CD4-positive, alpha-beta T cell (primary cell): ENCODE measurements at regions of chr3 and their contacts with region 1.

Region 1: GRCh38 chr3:128725932-128726690 is at the start of gene RAB7A:
- DNase-seq: peak; percentile 94 to 99 (median 97)
- ATAC-seq: peak; percentile 98
- H3K4me3 ChIP-seq: peak within 1 kb of the TSS; percentile 77
- H3K4me3 Mint-ChIP-seq: peak within 1 kb of the TSS; percentile 100
- H3K27ac ChIP-seq: peak within 1 kb of the TSS; percentile 64 to 78
- H3K27ac Mint-ChIP-seq: peak within 1 kb of the TSS; percentile 97
- H3K4me1 ChIP-seq: peaks cover 47% of the 10 kb centered on the region
- H3K4me1 Mint-ChIP-seq: peaks cover 57% of the 10 kb centered on the region
- H3K27me3 ChIP-seq: no peaks in the 10 kb centered on the region
- H3K27me3 Mint-ChIP-seq: no peaks in the 10 kb centered on the region
- CTCF ChIP-seq: no peak
- total RNA-seq, gene RAB7A: 113 to 121 TPM

Region 2: DNA sequence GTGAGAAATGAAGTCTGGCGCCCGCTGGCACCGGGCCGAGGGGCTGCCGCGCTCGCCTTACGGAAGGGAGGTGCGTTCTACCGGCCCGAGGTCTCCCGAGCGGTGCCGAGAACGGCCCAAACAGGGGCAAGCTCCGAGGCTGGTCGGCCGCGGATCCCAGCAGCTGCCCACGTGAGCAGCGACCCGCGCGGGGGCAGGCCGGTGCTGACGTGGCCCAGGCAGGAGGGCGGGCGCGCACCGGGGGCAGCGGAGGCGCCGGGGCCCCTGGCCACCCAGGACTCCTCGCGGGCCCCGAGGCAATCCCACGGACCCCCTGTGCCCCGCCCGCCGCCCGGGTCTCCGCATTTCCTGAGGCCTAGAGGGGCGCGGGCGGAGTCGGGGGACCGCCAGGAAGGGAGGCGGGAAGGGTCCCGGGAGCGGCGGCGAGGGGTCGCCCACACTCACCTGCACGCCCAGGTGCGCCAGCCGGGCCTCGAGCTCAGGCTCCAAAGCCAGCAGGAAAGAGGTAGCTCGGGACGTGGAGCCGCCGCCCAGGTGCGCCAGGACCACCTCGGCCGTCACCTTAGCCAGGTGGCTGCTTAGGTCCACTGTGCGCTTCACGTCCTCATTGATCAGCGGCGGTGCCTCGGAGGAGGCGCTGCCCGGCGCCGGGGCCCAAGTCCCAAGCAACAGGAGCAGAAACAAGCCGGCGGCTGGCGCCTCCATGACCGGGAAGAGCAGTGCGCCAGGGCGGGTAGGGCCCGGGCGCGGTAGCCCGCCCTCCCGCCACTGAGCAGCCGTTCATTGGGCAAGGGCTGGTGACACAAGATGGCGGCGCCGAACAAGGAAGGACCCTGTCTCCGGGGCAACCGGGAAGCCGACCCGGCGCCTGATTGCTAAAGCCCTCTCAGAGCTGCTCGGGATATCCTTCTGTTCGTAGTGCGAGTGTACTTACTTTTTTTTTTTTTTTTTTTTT is 75.7 kb before region 1 on chr3 and contains the start of gene RPN1:
- CTCF ChIA-PET with region 1: no interaction called
- POLR2A ChIA-PET with region 1: interaction called, 4 read pairs
- intact Hi-C with region 1: loop called in 1 of 2 experiments (anchors 2 kb)
- DNase-seq: peak; percentile 89 to 97 (median 94)
- ATAC-seq: peak; percentile 96
- H3K4me3 ChIP-seq: peak within 1 kb of the TSS; percentile 99
- H3K4me3 Mint-ChIP-seq: peak within 1 kb of the TSS; percentile 95
- H3K27ac ChIP-seq: peak within 1 kb of the TSS; percentile 89 to 93
- H3K27ac Mint-ChIP-seq: peak within 1 kb of the TSS; percentile 90
- H3K4me1 ChIP-seq: peaks cover 29% of the 10 kb centered on the region
- H3K4me1 Mint-ChIP-seq: peaks cover 45% of the 10 kb centered on the region
- H3K27me3 ChIP-seq: no peaks in the 10 kb centered on the region
- H3K27me3 Mint-ChIP-seq: no peaks in the 10 kb centered on the region
- CTCF ChIP-seq: no peak
- total RNA-seq, gene RPN1: 67.7 to 72.6 TPM

Region 3: DNA sequence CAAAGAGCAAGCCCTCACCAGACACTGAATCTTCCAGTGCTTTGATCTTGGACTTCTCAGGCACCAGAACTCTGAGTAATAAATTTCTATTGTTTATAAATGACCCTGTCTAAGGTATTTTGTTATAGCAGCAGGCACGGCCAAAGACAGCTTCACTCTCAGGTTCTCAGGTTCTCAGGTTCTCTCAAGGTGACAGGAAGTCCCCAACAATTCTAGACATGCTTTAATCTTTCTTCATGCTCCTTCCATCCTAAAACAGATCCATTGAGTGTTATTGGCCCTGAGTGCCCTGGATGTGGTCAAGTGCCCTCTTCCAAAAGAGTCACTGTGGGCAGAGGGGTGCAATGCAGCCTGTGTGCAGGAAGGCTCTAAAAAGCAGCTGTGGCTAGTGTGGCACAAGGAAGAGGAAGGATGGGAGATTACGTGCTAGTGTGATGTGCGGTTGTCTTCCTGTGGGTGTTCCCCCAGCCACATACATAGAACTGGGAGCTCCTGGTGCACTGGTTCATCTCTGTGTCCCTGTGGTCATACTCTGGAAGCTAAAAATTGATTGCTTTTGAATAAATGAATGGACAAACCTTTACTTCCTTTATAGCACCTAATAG is 11.1 kb before region 1 on chr3:
- CTCF ChIA-PET with region 1: no interaction called
- POLR2A ChIA-PET with region 1: interaction called, 15 read pairs
- intact Hi-C with region 1: no loop called
- DNase-seq: peak in 8 of 14 experiments; percentile 4 to 76 (median 38)
- ATAC-seq: peak; percentile 88
- H3K4me3 ChIP-seq: no peak overlapping the region
- H3K4me3 Mint-ChIP-seq: no peak overlapping the region
- H3K27ac ChIP-seq: peak overlapping the region in 1 of 2 donors; percentile 20
- H3K27ac Mint-ChIP-seq: peak overlapping the region; percentile 80
- H3K4me1 ChIP-seq: peaks cover 23% of the 10 kb centered on the region
- H3K4me1 Mint-ChIP-seq: peaks cover 25% of the 10 kb centered on the region
- H3K27me3 ChIP-seq: no peaks in the 10 kb centered on the region
- H3K27me3 Mint-ChIP-seq: no peaks in the 10 kb centered on the region
- CTCF ChIP-seq: no peak

Region 4: DNA sequence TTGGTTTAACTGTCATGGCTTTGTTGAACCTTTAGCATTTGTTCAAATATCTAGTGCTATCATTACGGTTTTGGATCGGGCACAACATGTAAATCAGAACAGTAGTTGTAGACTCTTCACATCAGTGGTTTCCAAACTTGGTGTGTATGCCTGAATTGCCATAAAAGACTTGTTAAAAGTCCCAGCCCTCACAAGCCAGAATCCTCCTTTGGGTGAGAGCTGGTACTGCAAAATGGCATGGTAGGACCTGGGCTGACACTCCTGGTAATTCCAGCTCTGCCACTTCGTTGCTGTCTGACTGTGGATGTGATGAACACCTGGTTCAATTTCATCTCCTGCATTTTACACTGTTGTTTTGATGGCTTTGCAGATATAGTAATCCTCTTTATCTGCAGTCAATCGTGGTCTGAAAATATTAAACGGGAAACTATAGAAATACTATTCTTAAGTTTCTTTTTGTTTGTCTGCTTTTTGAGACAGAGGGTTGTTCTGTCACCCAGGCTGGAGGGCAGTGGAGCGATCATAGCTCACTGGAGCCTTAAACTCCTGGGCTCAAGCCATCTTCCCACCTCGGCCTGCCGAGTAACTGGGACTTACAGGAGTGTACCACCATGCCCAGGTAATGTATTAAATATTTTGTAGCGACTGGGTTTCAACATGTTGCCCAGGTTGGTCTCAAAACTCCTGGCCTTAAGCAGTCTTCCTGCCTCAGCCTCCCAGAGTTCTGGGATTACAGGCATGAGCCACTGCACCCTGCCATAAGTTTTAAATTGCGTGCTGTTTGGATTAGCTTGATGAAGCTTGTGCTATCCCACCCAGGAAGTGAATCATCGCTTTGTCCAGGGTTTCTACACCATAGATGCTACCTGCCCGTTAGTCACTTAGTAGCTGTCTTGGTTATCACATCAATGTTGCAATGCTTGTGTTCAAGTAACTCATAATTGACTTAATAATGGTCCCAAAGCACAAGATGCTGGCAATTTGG is 61.4 kb after region 1 on chr3:
- CTCF ChIA-PET with region 1: no interaction called
- POLR2A ChIA-PET with region 1: interaction called, 6 read pairs
- intact Hi-C with region 1: loop called (anchors 2 to 5 kb)
- DNase-seq: peak in 8 of 14 experiments; percentile 8 to 79 (median 40)
- ATAC-seq: peak; percentile 54
- H3K4me3 ChIP-seq: no peak overlapping the region
- H3K4me3 Mint-ChIP-seq: peak overlapping the region; percentile 80
- H3K27ac ChIP-seq: peak overlapping the region; percentile 60 to 64
- H3K27ac Mint-ChIP-seq: peak overlapping the region; percentile 89
- H3K4me1 ChIP-seq: peaks cover 63% of the 10 kb centered on the region
- H3K4me1 Mint-ChIP-seq: peaks cover 94% of the 10 kb centered on the region
- H3K27me3 ChIP-seq: no peaks in the 10 kb centered on the region
- H3K27me3 Mint-ChIP-seq: no peaks in the 10 kb centered on the region
- CTCF ChIP-seq: peak; percentile 24

Region 5: GRCh38 chr3:128845778-128846485 is 119.8 kb after region 1 on chr3:
- CTCF ChIA-PET with region 1: interaction called, 6 read pairs
- POLR2A ChIA-PET with region 1: no interaction called
- intact Hi-C with region 1: loop called in 1 of 2 experiments (anchors 5 kb)
- DNase-seq: peak; percentile 62 to 88 (median 76)
- ATAC-seq: peak; percentile 81
- H3K4me3 ChIP-seq: peak overlapping the region; percentile 58
- H3K4me3 Mint-ChIP-seq: peak overlapping the region; percentile 72
- H3K27ac ChIP-seq: peak overlapping the region; percentile 7 to 18
- H3K27ac Mint-ChIP-seq: peak overlapping the region; percentile 55
- H3K4me1 ChIP-seq: peaks cover 21% of the 10 kb centered on the region
- H3K4me1 Mint-ChIP-seq: peaks cover 14% of the 10 kb centered on the region
- H3K27me3 ChIP-seq: no peaks in the 10 kb centered on the region
- H3K27me3 Mint-ChIP-seq: no peaks in the 10 kb centered on the region
- CTCF ChIP-seq: peak; percentile 90

Region 6: DNA sequence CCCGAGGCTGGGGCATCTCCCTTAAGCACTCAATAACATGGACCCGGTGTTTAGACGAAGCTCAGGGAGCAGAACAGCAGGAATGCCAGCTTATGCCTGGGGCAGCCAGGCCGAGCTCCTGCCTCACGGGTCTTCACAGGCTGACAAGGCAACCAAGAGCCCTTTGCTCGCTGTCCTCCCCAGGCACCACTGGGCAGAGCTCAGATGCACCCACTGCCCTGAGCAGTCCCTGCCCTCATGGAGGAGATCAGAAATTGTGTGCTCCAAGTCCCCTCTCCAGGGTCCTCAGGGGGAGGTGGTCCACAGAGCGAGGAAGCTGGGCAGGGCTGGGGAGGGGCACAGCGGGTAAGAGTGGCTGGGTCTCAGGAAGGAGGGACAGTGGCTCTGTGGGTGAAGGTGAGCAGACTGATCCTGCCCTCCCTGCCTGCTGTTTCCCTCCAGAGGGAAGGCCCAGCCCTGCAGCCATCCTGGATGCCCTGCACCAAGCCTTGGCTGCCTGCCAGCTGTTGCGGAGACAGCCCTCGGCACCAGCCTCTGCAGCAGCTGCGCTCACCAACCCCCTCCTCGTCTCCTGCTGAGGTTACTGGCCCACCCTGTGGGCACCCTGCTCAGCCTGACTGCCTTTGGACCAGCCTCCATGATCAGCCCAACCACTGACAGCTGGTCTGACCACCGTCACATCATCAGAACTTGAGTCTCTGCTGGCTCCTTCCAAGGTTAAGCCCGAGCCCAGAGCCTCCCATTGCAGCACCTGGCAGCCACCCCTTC is 313.3 kb after region 1 on chr3:
- CTCF ChIA-PET with region 1: no interaction called
- POLR2A ChIA-PET with region 1: no interaction called
- intact Hi-C with region 1: no loop called
- DNase-seq: peak in 3 of 14 experiments; percentile 41 to 42 (median 42)
- ATAC-seq: no peak
- H3K4me3 ChIP-seq: no peak overlapping the region
- H3K4me3 Mint-ChIP-seq: no peak overlapping the region
- H3K27ac ChIP-seq: no peak overlapping the region
- H3K27ac Mint-ChIP-seq: no peak overlapping the region
- H3K4me1 ChIP-seq: peaks cover 26% of the 10 kb centered on the region
- H3K4me1 Mint-ChIP-seq: peaks cover 16% of the 10 kb centered on the region
- H3K27me3 ChIP-seq: peaks cover 0 to 8% of the 10 kb centered on the region in 2 experiments
- H3K27me3 Mint-ChIP-seq: peaks cover 21% of the 10 kb centered on the region
- CTCF ChIP-seq: no peak

Region 7: DNA sequence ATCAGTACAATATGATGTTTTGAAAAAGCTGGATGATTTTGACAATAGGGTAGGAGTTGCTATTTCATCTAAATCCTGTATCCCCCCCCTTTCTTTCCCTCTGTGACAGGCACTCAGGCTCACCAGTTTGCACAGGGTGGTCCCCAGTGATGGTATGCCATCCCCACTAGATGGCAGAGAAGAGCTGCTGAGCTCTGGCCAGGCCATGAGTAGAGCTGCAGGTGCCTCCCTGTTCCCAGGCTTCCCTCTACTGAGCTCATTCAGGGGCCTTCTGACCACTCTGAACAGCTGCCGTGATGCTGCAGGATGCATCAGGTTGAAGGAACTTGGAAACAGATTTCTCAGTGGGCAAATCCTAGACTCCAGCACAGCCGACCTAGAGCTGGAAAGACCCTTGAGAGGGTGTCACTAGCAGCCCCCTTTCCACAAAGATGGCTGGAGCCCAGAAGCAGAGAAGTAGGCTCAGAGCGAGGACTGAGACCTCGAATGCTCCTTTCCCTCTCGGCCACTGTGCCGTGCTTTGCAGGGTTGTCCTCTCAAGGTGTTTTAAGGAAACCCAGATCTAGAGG is 657.3 kb after region 1 on chr3:
- CTCF ChIA-PET with region 1: no interaction called
- POLR2A ChIA-PET with region 1: no interaction called
- intact Hi-C with region 1: no loop called
- DNase-seq: peak; percentile 11 to 64 (median 30)
- ATAC-seq: peak; percentile 92
- H3K4me3 ChIP-seq: no peak overlapping the region
- H3K4me3 Mint-ChIP-seq: no peak overlapping the region
- H3K27ac ChIP-seq: no peak overlapping the region
- H3K27ac Mint-ChIP-seq: no peak overlapping the region
- H3K4me1 ChIP-seq: no peaks in the 10 kb centered on the region
- H3K4me1 Mint-ChIP-seq: no peaks in the 10 kb centered on the region
- H3K27me3 ChIP-seq: no peaks in the 10 kb centered on the region
- H3K27me3 Mint-ChIP-seq: no peaks in the 10 kb centered on the region
- CTCF ChIP-seq: peak; percentile 68

Region 8: DNA sequence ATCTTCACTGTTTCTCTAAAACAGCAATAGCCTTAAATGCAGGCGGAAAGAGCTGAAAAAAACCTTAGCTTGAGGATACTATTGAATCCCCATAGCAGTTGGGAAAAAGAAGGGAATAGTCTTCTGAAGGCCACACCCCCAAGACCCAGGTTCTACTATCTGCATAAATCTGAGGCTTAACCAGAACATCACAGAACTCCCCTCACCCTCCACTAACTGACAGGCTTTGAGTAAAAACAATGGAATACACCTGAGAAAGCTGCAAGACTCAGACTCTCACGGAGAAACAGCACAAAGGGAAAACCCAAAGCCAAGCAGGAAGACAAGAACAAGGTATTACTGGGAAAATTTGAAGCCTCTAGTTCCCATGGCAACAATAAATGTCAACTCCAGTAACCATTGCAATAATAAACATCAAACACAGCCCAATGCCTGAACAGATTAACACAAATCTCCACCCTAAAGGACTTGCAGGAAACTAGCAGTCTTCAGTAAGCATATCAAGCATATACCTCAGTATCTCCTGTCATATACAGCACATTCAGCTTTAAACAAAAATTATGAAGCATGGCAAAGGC is 1111.0 kb after region 1 on chr3:
- CTCF ChIA-PET with region 1: no interaction called
- POLR2A ChIA-PET with region 1: no interaction called
- intact Hi-C with region 1: no loop called
- DNase-seq: no peak
- ATAC-seq: no peak
- H3K4me3 ChIP-seq: no peak overlapping the region
- H3K4me3 Mint-ChIP-seq: no peak overlapping the region
- H3K27ac ChIP-seq: no peak overlapping the region
- H3K27ac Mint-ChIP-seq: no peak overlapping the region
- H3K4me1 ChIP-seq: no peaks in the 10 kb centered on the region
- H3K4me1 Mint-ChIP-seq: peaks cover 15% of the 10 kb centered on the region
- H3K27me3 ChIP-seq: no peaks in the 10 kb centered on the region
- H3K27me3 Mint-ChIP-seq: no peaks in the 10 kb centered on the region
- CTCF ChIP-seq: no peak